Transverse colon (tissue), 4 donors: ENCODE measurements at regions of chr13 and their contacts with region 1.

Region 1: DNA sequence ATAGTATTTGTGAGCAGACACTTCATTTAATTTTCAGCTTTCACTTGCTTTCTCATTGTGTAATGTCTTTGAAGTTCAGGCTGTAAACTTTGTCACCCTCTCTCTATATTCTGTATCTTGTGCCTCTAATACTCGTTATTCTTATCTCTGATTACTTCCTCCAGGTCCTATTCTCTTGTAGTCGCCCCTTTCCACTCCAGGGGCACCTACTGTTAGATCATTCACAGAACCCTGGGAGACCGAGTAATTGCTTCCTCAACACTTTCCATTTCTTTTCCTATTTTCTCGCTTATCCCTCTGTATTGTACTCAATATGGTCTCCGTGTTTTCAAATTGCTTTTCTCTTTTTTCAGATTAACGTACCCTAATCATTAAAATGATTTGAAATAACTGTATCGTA is 93.9 kb upstream of the TDRD3 start:
- DNase-seq: no peak
- H3K4me3 ChIP-seq: no peak overlapping the region
- H3K27ac ChIP-seq: no peak overlapping the region
- H3K4me1 ChIP-seq: no peaks in the 10 kb centered on the region
- H3K27me3 ChIP-seq: no peaks in the 10 kb centered on the region
- CTCF ChIP-seq: no peak
- EP300 ChIP-seq: no peak
- POLR2A ChIP-seq: no peak

Region 2: GRCh38 chr13:59542303-59542702 is 760.9 kb before region 1 on chr13:
- in situ Hi-C with region 1: no loop called
- intact Hi-C with region 1: no loop called
- DNase-seq: no peak
- H3K4me3 ChIP-seq: no peak overlapping the region
- H3K27ac ChIP-seq: no peak overlapping the region
- H3K4me1 ChIP-seq: no peaks in the 10 kb centered on the region
- H3K27me3 ChIP-seq: no peaks in the 10 kb centered on the region
- CTCF ChIP-seq: no peak
- EP300 ChIP-seq: no peak
- POLR2A ChIP-seq: no peak

Region 3: GRCh38 chr13:60214213-60215055 is 88.7 kb before region 1 on chr13:
- in situ Hi-C with region 1: no loop called
- intact Hi-C with region 1: loop called (anchors 1 kb)
- DNase-seq: no peak
- H3K4me3 ChIP-seq: no peak overlapping the region
- H3K27ac ChIP-seq: no peak overlapping the region
- H3K4me1 ChIP-seq: no peaks in the 10 kb centered on the region
- H3K27me3 ChIP-seq: no peaks in the 10 kb centered on the region
- CTCF ChIP-seq: no peak
- EP300 ChIP-seq: no peak
- POLR2A ChIP-seq: no peak

Region 4: DNA sequence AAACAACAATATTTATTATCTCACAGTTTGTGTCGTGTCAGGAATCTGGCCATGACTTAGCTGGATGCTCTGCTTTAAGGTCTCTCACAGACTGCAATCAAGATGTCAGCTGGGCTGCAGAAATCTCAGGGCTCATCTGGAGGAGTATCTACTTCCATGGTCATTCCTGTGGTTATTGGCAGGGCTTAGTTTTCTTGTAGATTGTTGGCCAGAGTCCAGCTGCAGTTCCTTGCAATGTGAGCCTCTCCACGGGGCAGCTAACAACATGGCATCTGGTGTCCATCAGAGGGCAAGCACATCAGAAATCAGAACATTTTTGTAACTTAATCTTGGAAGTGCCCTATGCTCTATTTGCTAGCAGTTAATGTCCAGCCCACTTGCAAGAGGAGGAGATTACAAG is 48.2 kb after region 1 on chr13:
- in situ Hi-C with region 1: no loop called
- intact Hi-C with region 1: no loop called
- DNase-seq: no peak
- H3K4me3 ChIP-seq: no peak overlapping the region
- H3K27ac ChIP-seq: no peak overlapping the region
- H3K4me1 ChIP-seq: no peaks in the 10 kb centered on the region
- H3K27me3 ChIP-seq: no peaks in the 10 kb centered on the region
- CTCF ChIP-seq: no peak
- EP300 ChIP-seq: no peak
- POLR2A ChIP-seq: no peak